ENCODE measurements at regions of chr2 and their contacts with region 1.

Region 1: GRCh38 chr2:10700078-10700803 is 10.5 kb upstream of the NOL10 start:
- H3K4me3 ChIP-seq: no peak overlapping the region
- H3K27ac ChIP-seq: no peak overlapping the region
- H3K4me1 ChIP-seq: no peaks in the 10 kb centered on the region
- CTCF ChIP-seq: no peak

Region 2: GRCh38 chr2:11145350-11145749 is 445.1 kb after region 1 on chr2:
- CTCF ChIA-PET with region 1: interaction called, 10 read pairs
- POLR2A ChIA-PET with region 1: no interaction called
- H3K4me3 ChIP-seq: no peak overlapping the region
- H3K27ac ChIP-seq: no peak overlapping the region
- H3K4me1 ChIP-seq: no peaks in the 10 kb centered on the region
- CTCF ChIP-seq: no peak